AG04449 (cell line): ENCODE measurements at regions of chr10 and their contacts with region 1.

Region 1: DNA sequence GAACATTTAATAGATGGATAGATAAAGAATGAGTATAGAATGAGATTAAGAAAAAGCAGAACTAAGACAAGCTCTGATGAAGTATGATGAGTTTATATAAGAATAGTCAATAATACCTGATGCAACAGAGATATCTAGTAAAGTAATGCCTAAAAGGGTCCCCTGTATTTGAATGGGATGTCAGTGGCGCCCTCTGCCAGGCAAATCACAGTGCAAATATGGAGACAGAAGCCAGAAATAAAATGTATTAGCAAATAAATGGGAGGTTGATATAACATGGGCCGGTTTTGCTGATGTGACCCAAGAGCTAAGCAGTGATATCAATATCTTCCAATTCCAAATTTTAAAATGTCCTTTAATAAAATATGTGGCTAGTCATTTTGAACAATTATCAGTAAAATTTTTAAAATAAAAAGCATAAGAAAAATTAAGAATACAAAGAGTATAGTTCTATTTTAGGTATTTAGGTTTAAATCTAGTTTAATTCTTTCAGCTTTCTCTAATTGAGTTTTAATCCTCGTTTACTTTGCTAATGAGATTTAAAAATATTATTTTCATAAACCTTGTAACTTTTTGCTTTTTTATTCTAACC is 62.6 kb downstream of the ADK start:
- DNase-seq: no peak
- H3K4me3 ChIP-seq: no peak overlapping the region
- CTCF ChIP-seq: peak; percentile 57

Region 2: DNA sequence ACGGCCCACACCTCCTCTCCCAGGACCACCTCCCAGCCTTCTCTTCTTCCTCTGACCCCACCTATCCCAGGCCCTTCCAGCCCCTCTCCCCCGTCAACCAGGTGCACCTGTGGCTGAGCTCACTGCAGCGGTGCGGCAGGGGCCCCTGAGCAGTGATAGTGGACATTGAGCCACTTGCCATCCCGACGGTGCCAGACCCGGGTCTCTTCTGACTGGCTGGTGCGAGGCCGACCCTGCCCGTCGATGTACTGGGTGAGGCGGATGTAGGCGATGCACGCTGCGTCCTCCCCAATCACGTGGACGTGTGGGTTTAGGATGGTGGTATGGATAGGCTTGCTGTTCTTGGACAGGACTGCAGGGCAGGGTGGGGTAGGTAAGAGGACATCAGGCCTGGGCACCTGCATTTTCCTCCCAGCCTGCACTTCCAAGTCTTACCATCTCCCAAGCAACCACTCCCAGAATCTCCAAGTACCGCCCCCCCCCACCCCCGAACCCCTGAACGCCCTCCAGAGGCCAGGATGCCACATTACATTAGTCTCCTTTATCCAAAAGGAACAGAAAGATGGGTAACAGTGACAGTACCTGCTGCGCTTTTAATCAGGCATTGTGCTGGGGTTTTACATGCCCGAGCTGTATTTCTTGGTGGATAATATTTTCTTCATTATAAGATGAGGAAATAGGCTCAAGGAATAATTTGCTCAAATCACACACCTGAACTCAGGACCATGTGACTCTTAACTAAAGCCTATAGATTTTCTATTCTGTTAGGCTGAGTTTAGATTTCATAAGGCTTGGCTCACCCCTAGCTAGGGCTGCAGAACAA is 398.6 kb before region 1 on chr10:
- CTCF ChIA-PET with region 1: no interaction called
- POLR2A ChIA-PET with region 1: no interaction called
- DNase-seq: no peak
- H3K4me3 ChIP-seq: no peak overlapping the region
- CTCF ChIP-seq: no peak

Region 3: GRCh38 chr10:74118804-74119203 is 94.9 kb before region 1 on chr10:
- CTCF ChIA-PET with region 1: interaction called, 35 read pairs
- POLR2A ChIA-PET with region 1: no interaction called
- DNase-seq: no peak
- H3K4me3 ChIP-seq: no peak overlapping the region
- CTCF ChIP-seq: no peak

Region 4: GRCh38 chr10:74151056-74151878 is 62.4 kb before region 1 on chr10 and contains the start of gene ADK:
- CTCF ChIA-PET with region 1: interaction called, 46 read pairs
- POLR2A ChIA-PET with region 1: no interaction called
- DNase-seq: peak; percentile 69
- H3K4me3 ChIP-seq: peak within 1 kb of the TSS; percentile 98
- CTCF ChIP-seq: peak; percentile 58

Region 5: GRCh38 chr10:74165530-74165901 is 48.2 kb before region 1 on chr10:
- CTCF ChIA-PET with region 1: interaction called, 16 read pairs
- POLR2A ChIA-PET with region 1: no interaction called
- DNase-seq: no peak
- H3K4me3 ChIP-seq: no peak overlapping the region
- CTCF ChIP-seq: no peak

Region 6: DNA sequence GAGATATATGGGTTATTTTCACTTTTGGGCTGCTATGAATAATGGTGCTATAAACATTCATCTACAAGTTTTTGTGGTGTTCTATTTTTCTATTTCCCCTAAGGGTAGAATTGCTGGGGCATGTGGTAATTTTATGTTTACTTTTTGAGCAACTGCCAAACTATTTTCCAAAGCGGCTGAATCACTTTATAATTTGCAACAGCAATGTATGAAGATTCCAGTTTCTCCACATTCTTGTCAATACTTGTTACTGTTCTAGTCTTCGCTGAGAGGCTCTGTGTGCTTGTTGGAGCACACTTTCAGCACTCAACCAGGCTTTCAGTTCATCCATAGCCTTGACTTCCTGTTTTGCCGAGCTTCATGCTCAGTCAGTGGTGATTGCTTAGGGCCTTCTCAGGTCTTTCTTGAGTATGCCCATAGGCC is 23.7 kb before region 1 on chr10:
- CTCF ChIA-PET with region 1: interaction called, 22 read pairs
- POLR2A ChIA-PET with region 1: no interaction called
- DNase-seq: peak; percentile 91
- H3K4me3 ChIP-seq: peak overlapping the region; percentile 35
- CTCF ChIP-seq: no peak

Region 7: GRCh38 chr10:74234569-74234968 is 20.9 kb after region 1 on chr10:
- CTCF ChIA-PET with region 1: interaction called, 21 read pairs
- POLR2A ChIA-PET with region 1: no interaction called
- DNase-seq: no peak
- H3K4me3 ChIP-seq: no peak overlapping the region
- CTCF ChIP-seq: no peak

Region 8: GRCh38 chr10:74255888-74256357 is 42.3 kb after region 1 on chr10:
- CTCF ChIA-PET with region 1: no interaction called
- POLR2A ChIA-PET with region 1: no interaction called
- DNase-seq: no peak
- H3K4me3 ChIP-seq: no peak overlapping the region
- CTCF ChIP-seq: no peak